ENCODE measurements at regions of chr7 and their contacts with region 1.

Region 1: DNA sequence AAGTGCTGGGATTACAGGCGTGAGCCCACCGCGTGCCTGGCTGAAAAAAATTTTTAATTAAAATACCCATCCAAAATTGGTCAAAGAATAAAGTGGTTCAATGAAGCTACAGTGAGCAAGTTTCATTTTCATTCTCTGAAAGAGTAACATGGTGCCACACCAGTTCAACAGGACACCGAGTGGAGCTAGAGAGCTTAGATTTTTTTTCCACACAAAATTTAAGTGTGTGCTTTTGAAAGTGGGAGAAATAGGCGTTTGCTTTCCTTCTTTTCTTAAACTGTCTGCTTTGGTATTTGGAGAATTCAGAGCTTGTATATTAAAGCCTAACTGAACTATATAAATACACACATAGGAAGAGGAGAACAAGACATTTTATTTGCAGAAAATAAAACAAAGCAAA is 43.4 kb downstream of the BPGM start:
- DNase-seq: no peak

Region 2: GRCh38 chr7:134730411-134730829 is 40.4 kb after region 1 on chr7:
- intact Hi-C with region 1: loop called (anchors 5 kb)
- DNase-seq: no peak

Region 3: GRCh38 chr7:134875867-134876266 is 185.9 kb after region 1 on chr7:
- intact Hi-C with region 1: loop called (anchors 5 kb)
- DNase-seq: no peak

Region 4: GRCh38 chr7:134954197-134955082 is 264.4 kb after region 1 on chr7:
- intact Hi-C with region 1: loop called (anchors 5 kb)
- DNase-seq: no peak

Region 5: GRCh38 chr7:135274495-135275268 is 584.7 kb after region 1 on chr7:
- intact Hi-C with region 1: loop called (anchors 5 kb)
- DNase-seq: peak; percentile 73

Measured in cardiac septum (tissue), 1 donor.